ENCODE measurements at regions of chr4 and their contacts with region 1.

Region 1: GRCh38 chr4:60847614-60848013 is 352.5 kb upstream of the ADGRL3 start:
- DNase-seq: peak; percentile 62 to 63
- H3K4me3 ChIP-seq: no peak overlapping the region
- H3K4me3 Mint-ChIP-seq: peak overlapping the region; percentile 30
- H3K27ac Mint-ChIP-seq: peak overlapping the region; percentile 86
- H3K4me1 ChIP-seq: peaks cover 20% of the 10 kb centered on the region
- H3K4me1 Mint-ChIP-seq: peaks cover 19% of the 10 kb centered on the region
- H3K27me3 ChIP-seq: no peaks in the 10 kb centered on the region
- H3K27me3 Mint-ChIP-seq: no peaks in the 10 kb centered on the region
- CTCF ChIP-seq: no peak

Region 2: GRCh38 chr4:60724623-60725022 is 123.0 kb before region 1 on chr4:
- CTCF ChIA-PET with region 1: no interaction called
- POLR2A ChIA-PET with region 1: no interaction called
- intact Hi-C with region 1: loop called (anchors 5 kb)
- DNase-seq: peak; percentile 54 to 68
- H3K4me3 ChIP-seq: no peak overlapping the region
- H3K4me3 Mint-ChIP-seq: peak overlapping the region; percentile 60
- H3K27ac Mint-ChIP-seq: peak overlapping the region; percentile 93
- H3K4me1 ChIP-seq: peaks cover 59% of the 10 kb centered on the region
- H3K4me1 Mint-ChIP-seq: peaks cover 25% of the 10 kb centered on the region
- H3K27me3 ChIP-seq: no peaks in the 10 kb centered on the region
- H3K27me3 Mint-ChIP-seq: no peaks in the 10 kb centered on the region
- CTCF ChIP-seq: no peak

Region 3: GRCh38 chr4:60805500-60806313 is 41.9 kb before region 1 on chr4:
- CTCF ChIA-PET with region 1: no interaction called
- POLR2A ChIA-PET with region 1: no interaction called
- intact Hi-C with region 1: loop called (anchors 5 kb)
- DNase-seq: peak in 1 of 2 experiments; percentile 35
- H3K4me3 ChIP-seq: no peak overlapping the region
- H3K4me3 Mint-ChIP-seq: no peak overlapping the region
- H3K27ac Mint-ChIP-seq: no peak overlapping the region
- H3K4me1 ChIP-seq: no peaks in the 10 kb centered on the region
- H3K4me1 Mint-ChIP-seq: peaks cover 8% of the 10 kb centered on the region
- H3K27me3 ChIP-seq: no peaks in the 10 kb centered on the region
- H3K27me3 Mint-ChIP-seq: no peaks in the 10 kb centered on the region
- CTCF ChIP-seq: peak; percentile 62 to 63

Region 4: DNA sequence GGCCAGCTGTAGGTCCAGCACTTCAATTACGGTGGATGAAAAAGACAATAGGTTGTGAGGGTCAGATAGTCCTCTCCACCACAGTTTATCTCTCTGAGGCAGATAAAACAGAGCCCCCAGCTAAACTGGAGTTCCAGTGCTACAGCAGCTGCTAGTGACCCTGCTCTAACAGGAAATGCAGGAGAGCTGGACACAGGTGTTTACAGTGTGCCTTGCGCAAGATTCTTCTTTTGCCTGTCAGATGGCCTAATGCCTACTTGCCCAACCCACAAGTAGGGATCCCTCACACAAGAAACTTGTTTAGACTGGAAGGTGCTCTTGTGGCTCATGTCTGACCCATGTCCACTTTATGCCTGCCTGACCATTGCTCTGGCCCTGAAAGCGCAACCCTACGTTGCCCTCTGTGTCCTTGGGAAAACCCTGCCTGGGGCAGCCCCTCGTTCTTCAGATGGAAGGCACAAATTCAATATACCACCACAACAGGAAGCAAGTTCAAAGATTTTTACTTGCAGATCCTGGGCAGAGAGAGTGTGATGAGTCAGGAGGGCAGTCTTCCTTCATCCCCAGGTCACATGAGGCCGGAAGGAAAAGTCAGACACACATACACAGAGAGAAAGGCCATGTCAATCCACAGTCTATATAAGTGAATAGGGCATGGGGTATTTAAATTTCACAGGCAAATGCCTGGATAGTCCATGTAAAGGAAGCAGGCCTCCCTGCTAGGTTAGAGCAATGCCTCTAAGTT is 247.4 kb after region 1 on chr4:
- CTCF ChIA-PET with region 1: no interaction called
- POLR2A ChIA-PET with region 1: no interaction called
- intact Hi-C with region 1: loop called (anchors 10 kb)
- DNase-seq: peak; percentile 35 to 62
- H3K4me3 ChIP-seq: no peak overlapping the region
- H3K4me3 Mint-ChIP-seq: no peak overlapping the region
- H3K27ac Mint-ChIP-seq: no peak overlapping the region
- H3K4me1 ChIP-seq: peaks cover 38% of the 10 kb centered on the region
- H3K4me1 Mint-ChIP-seq: peaks cover 19% of the 10 kb centered on the region
- H3K27me3 ChIP-seq: no peaks in the 10 kb centered on the region
- H3K27me3 Mint-ChIP-seq: no peaks in the 10 kb centered on the region
- CTCF ChIP-seq: no peak

Region 5: DNA sequence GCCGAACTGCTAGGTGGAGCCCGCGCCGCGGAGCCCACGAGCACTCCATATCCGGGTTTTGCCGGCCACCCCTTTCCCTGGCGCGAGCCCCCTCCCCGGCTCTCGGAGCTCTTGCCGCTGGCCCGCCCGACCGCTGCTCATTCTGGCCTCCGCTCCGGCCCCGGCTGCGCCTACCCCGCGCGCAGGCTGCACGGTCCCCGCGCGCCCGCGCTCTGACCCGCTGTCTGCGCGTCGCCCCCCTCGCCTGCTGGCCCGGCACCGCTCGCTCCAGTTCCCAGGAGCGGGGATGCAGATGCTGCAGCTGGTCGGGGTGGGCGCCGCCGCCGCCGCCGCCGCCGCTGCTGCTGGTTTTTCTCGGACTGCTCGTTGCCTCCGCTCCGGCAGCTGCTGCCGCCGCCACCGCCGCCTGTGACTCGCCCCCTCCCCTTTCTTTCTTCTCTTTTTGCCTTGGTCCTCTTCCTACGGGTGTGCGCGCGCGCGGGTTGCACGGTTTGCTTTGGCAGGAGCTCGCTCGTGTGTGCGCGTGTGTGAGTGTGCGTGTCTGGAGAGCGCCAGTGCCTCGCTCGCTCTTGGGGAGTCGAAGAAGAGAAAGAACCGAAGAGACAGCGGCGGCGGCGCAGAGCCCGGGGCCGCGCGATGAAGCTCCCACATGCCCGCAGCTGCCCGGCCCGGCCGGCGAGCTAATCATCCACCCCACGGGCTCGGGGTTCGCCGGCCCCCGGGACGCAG is 352.7 kb after region 1 on chr4 and contains the start of gene ADGRL3:
- CTCF ChIA-PET with region 1: no interaction called
- POLR2A ChIA-PET with region 1: no interaction called
- intact Hi-C with region 1: loop called (anchors 10 kb)
- DNase-seq: no peak
- H3K4me3 ChIP-seq: no peak within 1 kb of the TSS
- H3K4me3 Mint-ChIP-seq: no peak within 1 kb of the TSS
- H3K27ac Mint-ChIP-seq: peak within 1 kb of the TSS; percentile 14
- H3K4me1 ChIP-seq: peaks cover 21% of the 10 kb centered on the region
- H3K4me1 Mint-ChIP-seq: peaks cover 8% of the 10 kb centered on the region
- H3K27me3 ChIP-seq: no peaks in the 10 kb centered on the region
- H3K27me3 Mint-ChIP-seq: no peaks in the 10 kb centered on the region
- CTCF ChIP-seq: no peak
- total RNA-seq, gene ADGRL3: 1.5 and 1.9 TPM in 2 replicates